T-cell (primary cell): ENCODE measurements at regions of chr17 and their contacts with region 1.

Region 1: GRCh38 chr17:50967795-50968194 is 101.6 kb upstream of the TOB1 start:
- DNase-seq: no peak
- ATAC-seq: no peak
- H3K4me3 ChIP-seq: no peak overlapping the region
- H3K4me3 Mint-ChIP-seq: no peak overlapping the region
- H3K27ac ChIP-seq: no peak overlapping the region
- H3K27ac Mint-ChIP-seq: no peak overlapping the region
- H3K4me1 ChIP-seq: no peaks in the 10 kb centered on the region
- H3K4me1 Mint-ChIP-seq: peaks cover 5 to 13% (median 10%) of the 10 kb centered on the region in 3 donors
- H3K27me3 ChIP-seq: no peaks in the 10 kb centered on the region
- H3K27me3 Mint-ChIP-seq: no peaks in the 10 kb centered on the region

Region 2: GRCh38 chr17:50887705-50888245 is 80.0 kb before region 1 on chr17:
- CTCF ChIA-PET with region 1: no interaction called
- POLR2A ChIA-PET with region 1: no interaction called
- DNase-seq: no peak
- ATAC-seq: no peak
- H3K4me3 ChIP-seq: no peak overlapping the region
- H3K4me3 Mint-ChIP-seq: peak overlapping the region in 2 of 3 donors; percentile 2 to 62
- H3K27ac ChIP-seq: no peak overlapping the region
- H3K27ac Mint-ChIP-seq: peak overlapping the region; percentile 42 to 53
- H3K4me1 ChIP-seq: peaks cover 19 to 28% of the 10 kb centered on the region in 2 experiments
- H3K4me1 Mint-ChIP-seq: peaks cover 23 to 37% (median 24%) of the 10 kb centered on the region in 3 donors
- H3K27me3 ChIP-seq: peaks cover 0 to 4% of the 10 kb centered on the region in 2 experiments
- H3K27me3 Mint-ChIP-seq: no peaks in the 10 kb centered on the region

Region 3: GRCh38 chr17:51147650-51148049 is 179.9 kb after region 1 on chr17:
- CTCF ChIA-PET with region 1: interaction called in 1 of 2 experiments, 12 read pairs
- POLR2A ChIA-PET with region 1: no interaction called
- DNase-seq: no peak
- ATAC-seq: no peak
- H3K4me3 ChIP-seq: no peak overlapping the region
- H3K4me3 Mint-ChIP-seq: no peak overlapping the region
- H3K27ac ChIP-seq: no peak overlapping the region
- H3K27ac Mint-ChIP-seq: no peak overlapping the region
- H3K4me1 ChIP-seq: peaks cover 1 to 2% of the 10 kb centered on the region in 2 experiments
- H3K4me1 Mint-ChIP-seq: no peaks in the 10 kb centered on the region
- H3K27me3 ChIP-seq: no peaks in the 10 kb centered on the region
- H3K27me3 Mint-ChIP-seq: no peaks in the 10 kb centered on the region